HCT116 (cell line): ENCODE measurements at regions of chr5 and their contacts with region 1.

Region 1: DNA sequence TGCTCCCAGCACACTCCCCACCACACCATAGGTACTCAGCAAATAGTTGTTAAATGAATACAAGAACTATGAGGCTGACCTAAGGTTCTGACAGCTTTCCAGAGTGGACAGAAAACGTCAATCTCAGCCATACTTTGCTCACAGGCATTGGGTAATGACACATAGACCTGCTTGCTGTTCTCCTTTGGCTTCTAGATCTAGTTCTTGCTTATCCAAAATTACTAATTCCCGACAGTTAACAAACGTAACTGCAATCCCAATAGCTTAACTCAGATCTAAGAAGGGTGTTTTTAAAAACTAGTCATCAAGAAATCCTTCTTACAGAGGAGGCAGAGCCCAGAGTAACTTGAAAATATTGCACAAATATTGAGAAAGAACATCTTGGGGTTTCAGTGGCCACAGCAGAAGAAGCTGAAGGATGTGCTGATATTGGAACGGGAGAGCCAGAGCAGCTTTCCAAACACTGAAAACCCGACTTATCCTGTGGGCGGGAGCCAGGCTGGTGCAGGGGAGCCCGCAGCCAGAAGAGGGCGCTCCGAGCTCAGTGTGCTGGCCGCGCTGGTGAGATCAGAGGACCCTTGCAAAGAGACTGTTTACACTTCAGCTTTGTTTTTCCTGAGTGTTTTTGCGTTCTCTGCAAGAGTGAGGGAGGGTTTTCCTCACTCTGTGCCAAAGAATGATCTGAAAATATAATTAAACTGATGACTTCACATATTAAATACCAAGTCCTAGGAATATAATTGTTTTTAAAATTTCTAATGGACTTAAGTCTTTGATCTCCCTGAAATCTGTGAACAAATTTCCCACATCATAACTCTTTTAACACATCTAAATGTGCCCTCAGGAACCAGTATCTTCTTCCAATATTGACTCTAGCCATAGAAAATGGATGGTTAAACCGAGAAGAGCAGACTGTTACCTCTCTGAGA is 30.3 kb downstream of the FGF1 start:
- DNase-seq: peak; percentile 33
- ATAC-seq: peak; percentile 98
- H3K4me3 ChIP-seq: no peak overlapping the region
- H3K27ac ChIP-seq: no peak overlapping the region
- H3K4me1 ChIP-seq: peaks cover 0 to 3% of the 10 kb centered on the region in 2 experiments; a peak in 1 of 4 replicates
- H3K27me3 ChIP-seq: no peaks in the 10 kb centered on the region
- CTCF ChIP-seq: peak; percentile 96 to 99 (median 96)
- POLR2A ChIP-seq: no peak
- RAD21 ChIP-seq: peak; percentile 99

Region 2: DNA sequence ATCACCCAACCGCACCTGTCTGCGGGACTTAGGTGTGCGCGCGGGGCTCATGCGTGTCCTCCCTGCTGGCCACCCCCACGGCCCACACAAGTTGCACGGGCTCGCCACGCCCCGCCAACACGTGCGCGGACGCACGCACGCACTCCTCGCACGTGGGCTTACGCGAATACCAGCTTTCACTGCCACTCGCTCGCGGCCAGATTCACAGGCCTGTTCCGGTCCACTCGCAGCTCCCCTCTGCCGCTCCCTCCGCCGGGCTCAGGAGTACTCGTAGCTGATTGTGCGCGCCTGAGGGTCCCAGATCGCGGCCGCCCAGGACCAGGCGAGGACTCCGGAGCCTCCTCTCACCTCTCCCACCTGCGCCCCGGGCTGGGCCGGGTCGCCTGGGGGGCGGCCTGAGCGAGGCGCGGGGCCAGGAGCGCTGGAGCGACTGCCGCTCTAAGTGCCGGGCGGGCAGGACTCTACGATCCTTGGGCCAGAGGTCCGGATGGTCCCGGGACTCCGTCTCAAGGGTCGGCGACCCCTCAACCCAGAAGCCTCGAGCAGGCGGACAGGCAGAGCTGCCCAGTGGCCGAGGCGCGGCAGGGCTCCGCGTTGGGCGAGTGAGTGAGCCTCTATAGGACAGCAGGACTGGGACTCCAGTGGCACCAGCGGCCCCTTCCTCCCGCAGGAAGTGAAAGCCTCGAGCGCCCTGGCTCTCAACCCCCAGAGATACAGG is 1163.3 kb before region 1 on chr5:
- CTCF ChIA-PET with region 1: no interaction called
- POLR2A ChIA-PET with region 1: no interaction called
- RAD21 ChIA-PET with region 1: no interaction called
- intact Hi-C with region 1: no loop called
- DNase-seq: no peak
- ATAC-seq: no peak
- H3K4me3 ChIP-seq: no peak overlapping the region
- H3K27ac ChIP-seq: no peak overlapping the region
- H3K4me1 ChIP-seq: no peaks in the 10 kb centered on the region
- H3K27me3 ChIP-seq: no peaks in the 10 kb centered on the region
- CTCF ChIP-seq: no peak
- POLR2A ChIP-seq: no peak
- RAD21 ChIP-seq: no peak

Region 3: DNA sequence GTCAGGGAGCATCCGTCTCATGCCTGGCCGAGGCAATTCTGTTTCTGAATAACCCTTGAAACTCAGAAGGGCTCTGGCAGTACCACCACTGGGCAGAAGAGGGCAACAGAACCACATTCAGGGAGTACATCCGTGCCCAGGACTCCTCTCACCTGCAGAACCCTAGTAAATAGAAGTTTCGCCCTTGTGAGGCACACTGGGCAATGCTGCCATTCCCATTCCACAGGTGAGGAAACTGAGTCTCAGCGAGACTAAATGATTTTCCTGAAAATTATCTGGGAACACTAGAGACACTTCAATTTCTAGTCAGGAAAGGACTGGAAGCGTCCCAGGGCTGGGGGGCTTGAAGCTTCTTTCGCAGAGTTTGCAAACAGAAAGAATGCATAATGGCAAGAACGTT is 44.4 kb before region 1 on chr5:
- CTCF ChIA-PET with region 1: interaction called, 6 read pairs
- POLR2A ChIA-PET with region 1: no interaction called
- RAD21 ChIA-PET with region 1: interaction called in 1 of 2 experiments, 3 read pairs
- intact Hi-C with region 1: loop called (anchors 1 kb)
- DNase-seq: peak; percentile 60
- ATAC-seq: peak; percentile 97
- H3K4me3 ChIP-seq: no peak overlapping the region
- H3K27ac ChIP-seq: no peak overlapping the region
- H3K4me1 ChIP-seq: no peaks in the 10 kb centered on the region
- H3K27me3 ChIP-seq: no peaks in the 10 kb centered on the region
- CTCF ChIP-seq: peak; percentile 65 to 91 (median 85)
- POLR2A ChIP-seq: no peak
- RAD21 ChIP-seq: peak; percentile 95

Region 4: DNA sequence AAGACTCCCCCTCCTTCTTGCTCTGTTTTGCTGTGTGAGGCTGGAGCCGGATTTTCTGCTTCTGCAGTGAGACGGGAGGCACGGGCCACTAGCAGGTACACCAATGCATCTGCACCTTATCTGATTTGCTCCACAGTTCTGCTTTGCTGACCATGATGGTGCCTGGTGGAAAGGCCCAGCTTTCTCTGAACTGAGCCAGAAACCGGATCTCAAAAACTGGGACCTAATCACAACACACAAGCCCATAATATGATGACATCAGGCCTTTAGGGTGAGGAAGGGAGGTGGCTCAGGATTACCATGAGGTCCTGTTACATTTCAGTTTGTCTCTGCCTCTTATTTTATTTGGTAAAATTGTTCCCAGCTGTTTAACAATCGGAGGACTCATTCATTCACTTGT is 19.5 kb before region 1 on chr5:
- CTCF ChIA-PET with region 1: no interaction called
- POLR2A ChIA-PET with region 1: no interaction called
- RAD21 ChIA-PET with region 1: no interaction called
- intact Hi-C with region 1: no loop called
- DNase-seq: no peak
- ATAC-seq: no peak
- H3K4me3 ChIP-seq: no peak overlapping the region
- H3K27ac ChIP-seq: no peak overlapping the region
- H3K4me1 ChIP-seq: no peaks in the 10 kb centered on the region
- H3K27me3 ChIP-seq: no peaks in the 10 kb centered on the region
- CTCF ChIP-seq: no peak
- POLR2A ChIP-seq: no peak
- RAD21 ChIP-seq: no peak

Region 5: DNA sequence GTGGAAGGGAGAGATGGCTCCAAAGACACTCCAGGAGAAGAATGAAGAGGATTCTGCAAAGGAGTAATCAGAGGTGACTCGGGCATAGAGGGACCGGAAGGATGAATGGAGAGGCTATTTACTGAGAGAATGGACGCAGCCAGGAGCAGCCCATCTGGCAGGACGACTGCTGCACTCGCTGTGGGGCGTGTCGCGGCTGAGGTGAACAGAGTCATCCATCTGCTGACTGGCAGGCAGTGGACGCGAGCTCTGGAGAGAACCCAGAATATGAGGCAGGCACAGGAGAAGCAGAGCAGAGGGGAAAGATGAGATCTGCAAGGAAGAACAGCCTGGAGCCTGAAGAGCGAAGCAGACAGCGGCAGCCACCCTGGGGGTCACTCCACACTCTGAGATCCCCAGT is 13.9 kb after region 1 on chr5:
- CTCF ChIA-PET with region 1: interaction called, 21 read pairs
- POLR2A ChIA-PET with region 1: no interaction called
- RAD21 ChIA-PET with region 1: interaction called in 1 of 2 experiments, 3 read pairs
- intact Hi-C with region 1: no loop called
- DNase-seq: no peak
- ATAC-seq: no peak
- H3K4me3 ChIP-seq: no peak overlapping the region
- H3K27ac ChIP-seq: no peak overlapping the region
- H3K4me1 ChIP-seq: peaks cover 3 to 11% of the 10 kb centered on the region in 2 experiments; a peak in 3 of 4 replicates
- H3K27me3 ChIP-seq: no peaks in the 10 kb centered on the region
- CTCF ChIP-seq: no peak
- POLR2A ChIP-seq: no peak
- RAD21 ChIP-seq: no peak

Region 6: GRCh38 chr5:142699184-142699720 is 43.6 kb after region 1 on chr5:
- CTCF ChIA-PET with region 1: interaction called, 83 read pairs
- POLR2A ChIA-PET with region 1: interaction called, 3 read pairs
- RAD21 ChIA-PET with region 1: interaction called, 23 to 25 read pairs
- intact Hi-C with region 1: loop called (anchors 1 kb)
- DNase-seq: peak; percentile 66
- ATAC-seq: peak; percentile 98
- H3K4me3 ChIP-seq: no peak overlapping the region
- H3K27ac ChIP-seq: no peak overlapping the region
- H3K4me1 ChIP-seq: peaks cover 11 to 14% of the 10 kb centered on the region in 2 experiments; a peak in 3 of 4 replicates
- H3K27me3 ChIP-seq: no peaks in the 10 kb centered on the region
- CTCF ChIP-seq: peak; percentile 94 to 97 (median 97)
- POLR2A ChIP-seq: no peak
- RAD21 ChIP-seq: peak; percentile 100

Region 7: GRCh38 chr5:142888469-142889085 is 233.0 kb after region 1 on chr5:
- CTCF ChIA-PET with region 1: interaction called, 13 read pairs
- POLR2A ChIA-PET with region 1: no interaction called
- RAD21 ChIA-PET with region 1: no interaction called
- intact Hi-C with region 1: loop called (anchors 2 kb)
- DNase-seq: no peak
- ATAC-seq: peak; percentile 78
- H3K4me3 ChIP-seq: no peak overlapping the region
- H3K27ac ChIP-seq: no peak overlapping the region
- H3K4me1 ChIP-seq: peaks cover 6 to 10% of the 10 kb centered on the region in 2 experiments; a peak in 1 of 4 replicates
- H3K27me3 ChIP-seq: no peaks in the 10 kb centered on the region
- CTCF ChIP-seq: peak; percentile 59 to 84 (median 80)
- POLR2A ChIP-seq: no peak
- RAD21 ChIP-seq: peak; percentile 82